Activated T-helper 1 cell treated with anti-CD3 and anti-CD28 coated beads, Interleukin-12 subunit alpha, Interleukin-12 subunit beta, Interleukin-2, Interleukin-4 antibody, amounts not matched to agents 30 ng/mL and 10 ng/mL and 1 ng/mL, durations not matched to agents 14 hours and 24 hours and 36 hours (primary cell): ENCODE measurements at regions of chr5 and their contacts with region 1.

Region 1: DNA sequence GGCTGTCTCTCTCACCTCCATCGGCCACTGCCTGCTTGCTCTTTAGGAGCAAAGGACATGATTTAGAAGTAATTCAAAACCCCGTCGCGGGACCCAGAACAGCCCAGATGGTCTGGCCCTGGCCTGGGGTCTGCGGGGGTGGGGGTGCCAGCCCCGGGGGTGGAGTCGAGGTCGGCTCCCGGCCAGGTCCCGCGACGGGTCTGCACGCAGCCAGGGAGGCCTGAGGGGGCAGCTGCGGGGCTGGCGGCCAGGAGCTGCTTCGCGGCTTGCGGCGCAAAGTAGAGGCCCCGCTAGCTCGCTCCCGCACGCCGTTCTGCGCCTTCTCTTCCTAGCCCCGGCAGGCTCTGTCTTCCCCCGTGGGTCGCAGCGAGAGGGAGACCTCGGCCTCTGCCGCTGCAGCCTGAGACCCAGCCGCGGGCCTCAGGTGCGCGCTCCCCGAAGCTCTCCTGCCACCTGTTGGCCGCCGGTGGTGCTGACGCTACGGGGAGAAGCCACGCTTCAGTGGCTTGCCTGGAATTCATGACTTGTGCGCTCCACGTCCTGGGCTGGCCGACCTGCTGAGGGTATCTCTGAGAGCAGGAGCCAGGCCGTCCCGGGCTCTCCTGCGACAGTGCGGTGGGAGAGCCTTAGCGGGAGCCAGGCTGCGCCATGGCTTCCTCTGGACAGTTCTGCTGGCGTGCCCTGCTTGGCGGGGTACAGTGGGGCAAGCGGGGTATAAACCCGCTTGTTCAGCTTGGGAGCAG is 157.2 kb upstream of the PITX1 start:
- DNase-seq: peak; percentile 63
- H3K4me3 Mint-ChIP-seq: peak overlapping the region; percentile 59
- H3K27ac Mint-ChIP-seq: no peak overlapping the region
- H3K4me1 Mint-ChIP-seq: no peaks in the 10 kb centered on the region
- H3K27me3 Mint-ChIP-seq: peaks cover 43% of the 10 kb centered on the region

Region 2: DNA sequence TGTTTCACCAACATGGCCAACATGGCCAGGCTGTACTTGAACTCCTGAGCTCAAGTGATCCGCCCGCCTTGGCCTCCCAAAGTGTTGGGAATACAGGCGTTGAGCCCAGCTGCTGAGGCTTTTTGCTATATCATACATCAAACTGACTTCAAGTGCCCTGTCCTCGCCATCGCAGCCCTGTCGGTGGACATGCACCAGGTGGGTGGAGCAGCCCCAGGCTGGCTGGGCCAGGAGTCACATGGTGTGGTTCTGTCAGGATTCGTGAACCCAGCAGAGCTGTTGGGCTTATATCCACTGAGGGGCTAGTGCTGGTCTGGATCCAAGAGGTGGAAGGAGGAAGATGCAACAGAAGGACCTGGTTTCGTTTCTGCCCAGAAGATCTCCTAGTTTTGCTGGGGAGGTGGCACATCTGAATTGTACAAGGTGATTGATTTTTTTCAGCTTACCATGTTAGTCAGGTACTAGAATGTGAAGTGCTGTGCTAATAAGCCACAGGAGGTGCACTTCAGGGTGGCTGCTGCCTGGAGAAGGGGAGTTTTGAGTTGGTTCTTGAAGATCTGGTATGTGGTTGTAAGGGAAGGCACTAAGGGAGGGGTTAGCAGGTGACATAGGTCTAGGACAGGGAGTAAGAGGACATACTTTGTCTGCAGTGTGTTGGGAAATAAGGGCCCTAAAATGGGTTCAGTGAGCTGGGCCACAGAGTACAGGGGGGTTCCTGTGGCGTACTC is 270.2 kb before region 1 on chr5:
- intact Hi-C with region 1: loop called (anchors 2 kb)
- DNase-seq: no peak
- H3K4me3 Mint-ChIP-seq: no peak overlapping the region
- H3K27ac Mint-ChIP-seq: peak overlapping the region; percentile 77
- H3K4me1 Mint-ChIP-seq: peaks cover 24% of the 10 kb centered on the region
- H3K27me3 Mint-ChIP-seq: no peaks in the 10 kb centered on the region

Region 3: GRCh38 chr5:134944630-134945029 is 246.6 kb before region 1 on chr5:
- intact Hi-C with region 1: loop called (anchors 5 kb)
- DNase-seq: no peak
- H3K4me3 Mint-ChIP-seq: no peak overlapping the region
- H3K27ac Mint-ChIP-seq: no peak overlapping the region
- H3K4me1 Mint-ChIP-seq: no peaks in the 10 kb centered on the region
- H3K27me3 Mint-ChIP-seq: no peaks in the 10 kb centered on the region

Region 4: GRCh38 chr5:135332519-135333150 is 141.4 kb after region 1 on chr5:
- intact Hi-C with region 1: loop called (anchors 1 kb)
- DNase-seq: no peak
- H3K4me3 Mint-ChIP-seq: no peak overlapping the region
- H3K27ac Mint-ChIP-seq: no peak overlapping the region
- H3K4me1 Mint-ChIP-seq: peaks cover 13% of the 10 kb centered on the region
- H3K27me3 Mint-ChIP-seq: no peaks in the 10 kb centered on the region